Breast epithelium (tissue), 4 donors: ENCODE measurements at regions of chr9 and their contacts with region 1.

Region 1: DNA sequence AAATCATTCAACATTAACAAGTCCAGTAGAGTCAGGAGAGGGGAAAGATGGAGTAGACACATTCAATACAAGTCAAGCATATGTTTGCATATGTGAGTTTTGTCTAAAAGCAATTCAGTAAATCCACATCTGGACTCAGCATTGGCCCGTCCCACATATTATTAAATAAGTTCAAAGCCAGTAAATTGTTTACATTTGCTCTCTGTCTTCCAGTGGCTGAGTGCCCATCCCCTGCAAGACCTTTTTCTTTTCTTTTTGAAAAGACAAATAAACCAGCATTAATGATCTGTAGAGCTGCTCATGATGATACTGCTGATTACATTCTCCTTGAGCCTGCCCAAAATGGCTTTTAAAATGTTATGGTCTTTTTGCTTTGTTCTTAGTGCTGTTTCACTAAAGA is 71.1 kb downstream of the TNC start:
- DNase-seq: no peak
- H3K4me3 ChIP-seq: no peak overlapping the region
- H3K27ac ChIP-seq: no peak overlapping the region
- H3K4me1 ChIP-seq: no peaks in the 10 kb centered on the region
- H3K27me3 ChIP-seq: no peaks in the 10 kb centered on the region
- CTCF ChIP-seq: no peak
- POLR2A ChIP-seq: no peak

Region 2: GRCh38 chr9:113293285-113293878 is 1753.4 kb before region 1 on chr9:
- intact Hi-C with region 1: no loop called
- DNase-seq: no peak
- H3K4me3 ChIP-seq: no peak overlapping the region
- H3K27ac ChIP-seq: no peak overlapping the region
- H3K4me1 ChIP-seq: no peaks in the 10 kb centered on the region
- H3K27me3 ChIP-seq: no peaks in the 10 kb centered on the region
- CTCF ChIP-seq: no peak
- POLR2A ChIP-seq: no peak

Region 3: DNA sequence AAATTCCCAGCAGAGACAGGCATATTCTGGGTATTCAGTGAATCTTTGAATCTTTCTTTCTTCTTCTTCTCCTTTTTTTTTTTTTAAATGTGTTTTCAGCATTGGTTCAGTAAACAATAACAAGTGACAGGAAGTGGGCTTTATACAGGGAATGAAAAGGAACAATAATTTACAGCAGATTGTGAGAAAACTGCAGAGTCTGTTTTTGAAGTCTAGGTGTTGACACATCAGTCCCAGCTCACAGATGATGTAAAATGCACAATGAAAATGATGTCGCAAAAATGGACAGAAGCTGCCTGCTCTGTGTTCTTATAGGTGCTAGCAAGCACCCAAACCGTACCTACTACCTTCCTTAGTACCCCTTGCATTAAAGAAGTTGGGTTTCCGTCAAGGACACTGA is 32.3 kb after region 1 on chr9:
- intact Hi-C with region 1: loop called (anchors 2 kb)
- DNase-seq: no peak
- H3K4me3 ChIP-seq: no peak overlapping the region
- H3K27ac ChIP-seq: no peak overlapping the region
- H3K4me1 ChIP-seq: no peaks in the 10 kb centered on the region
- H3K27me3 ChIP-seq: no peaks in the 10 kb centered on the region
- CTCF ChIP-seq: no peak
- POLR2A ChIP-seq: no peak